ENCODE measurements at regions of chr10 and their contacts with region 1.

Region 1: GRCh38 chr10:63268798-63269503 is 135.8 kb downstream of the NRBF2 start:
- DNase-seq: peak; percentile 100
- ATAC-seq: peak; percentile 90
- H3K4me3 ChIP-seq: peak overlapping the region; percentile 69
- H3K27ac ChIP-seq: peak overlapping the region; percentile 76
- H3K4me1 ChIP-seq: peaks cover 38% of the 10 kb centered on the region
- H3K27me3 ChIP-seq: no peaks in the 10 kb centered on the region
- CTCF ChIP-seq: peak; percentile 63

Region 2: GRCh38 chr10:63217120-63217605 is 51.8 kb before region 1 on chr10:
- CTCF ChIA-PET with region 1: interaction called, 5 read pairs
- POLR2A ChIA-PET with region 1: interaction called, 4 read pairs
- intact Hi-C with region 1: loop called (anchors 1 kb)
- DNase-seq: peak; percentile 92
- ATAC-seq: peak; percentile 85
- H3K4me3 ChIP-seq: no peak overlapping the region
- H3K27ac ChIP-seq: no peak overlapping the region; the same call in 1 of the 2 replicates
- H3K4me1 ChIP-seq: peaks cover 5% of the 10 kb centered on the region
- H3K27me3 ChIP-seq: no peaks in the 10 kb centered on the region
- CTCF ChIP-seq: peak; percentile 100

Region 3: GRCh38 chr10:63416376-63416775 is 147.4 kb after region 1 on chr10:
- CTCF ChIA-PET with region 1: no interaction called
- POLR2A ChIA-PET with region 1: interaction called, 4 read pairs
- intact Hi-C with region 1: loop called (anchors 1 kb)
- DNase-seq: no peak
- ATAC-seq: no peak
- H3K4me3 ChIP-seq: no peak overlapping the region
- H3K27ac ChIP-seq: no peak overlapping the region
- H3K4me1 ChIP-seq: peaks cover 43% of the 10 kb centered on the region
- H3K27me3 ChIP-seq: no peaks in the 10 kb centered on the region
- CTCF ChIP-seq: no peak

Region 4: GRCh38 chr10:63465293-63466143 is 196.6 kb after region 1 on chr10 and contains the start of gene JMJD1C:
- CTCF ChIA-PET with region 1: no interaction called
- POLR2A ChIA-PET with region 1: interaction called, 12 read pairs
- intact Hi-C with region 1: loop called (anchors 1 kb)
- DNase-seq: peak; percentile 97
- ATAC-seq: peak; percentile 67
- H3K4me3 ChIP-seq: peak within 1 kb of the TSS; percentile 83
- H3K27ac ChIP-seq: peak within 1 kb of the TSS; percentile 69
- H3K4me1 ChIP-seq: peaks cover 26% of the 10 kb centered on the region
- H3K27me3 ChIP-seq: no peaks in the 10 kb centered on the region
- CTCF ChIP-seq: peak; percentile 34
- total RNA-seq, gene JMJD1C: 121 and 139 TPM in 2 replicates

Region 5: DNA sequence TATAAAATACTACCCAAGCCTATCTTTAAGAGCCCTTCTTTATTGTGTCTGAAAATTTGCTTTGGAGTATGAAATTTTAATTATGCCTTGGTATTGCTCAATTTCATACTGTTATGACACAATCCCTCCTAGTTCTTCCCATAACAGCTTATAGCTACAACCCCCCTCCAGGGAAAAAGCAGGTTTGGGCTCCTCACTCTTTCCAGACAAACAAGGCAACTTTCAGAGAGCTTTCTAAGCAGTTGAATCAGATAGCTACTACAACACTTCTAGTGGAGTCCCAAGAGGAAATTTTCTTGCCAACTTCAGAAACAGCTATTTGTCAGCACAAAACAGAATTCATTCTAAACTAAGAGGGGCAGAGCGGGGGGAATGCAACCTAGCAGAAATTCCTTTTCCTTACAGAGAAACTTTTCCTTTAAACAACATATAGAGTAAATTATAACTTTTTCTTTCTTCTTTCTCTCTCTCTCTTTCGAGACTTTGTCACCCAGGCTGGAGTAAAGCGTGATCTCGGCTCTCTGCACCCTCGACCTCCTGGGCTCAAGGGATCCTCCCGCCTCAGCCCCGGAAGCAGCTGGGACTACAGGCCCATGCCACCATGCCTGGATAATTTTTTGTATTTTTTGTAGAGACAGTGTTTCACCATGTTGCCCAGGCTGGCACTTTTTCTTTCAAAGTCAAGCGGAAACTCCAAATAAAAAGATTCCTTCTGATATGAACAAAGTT is 222.8 kb after region 1 on chr10:
- CTCF ChIA-PET with region 1: no interaction called
- POLR2A ChIA-PET with region 1: no interaction called
- intact Hi-C with region 1: no loop called
- DNase-seq: peak; percentile 83
- ATAC-seq: peak; percentile 47
- H3K4me3 ChIP-seq: no peak overlapping the region
- H3K27ac ChIP-seq: peak overlapping the region; percentile 84
- H3K4me1 ChIP-seq: peaks cover 23% of the 10 kb centered on the region
- H3K27me3 ChIP-seq: no peaks in the 10 kb centered on the region
- CTCF ChIP-seq: no peak

Region 6: DNA sequence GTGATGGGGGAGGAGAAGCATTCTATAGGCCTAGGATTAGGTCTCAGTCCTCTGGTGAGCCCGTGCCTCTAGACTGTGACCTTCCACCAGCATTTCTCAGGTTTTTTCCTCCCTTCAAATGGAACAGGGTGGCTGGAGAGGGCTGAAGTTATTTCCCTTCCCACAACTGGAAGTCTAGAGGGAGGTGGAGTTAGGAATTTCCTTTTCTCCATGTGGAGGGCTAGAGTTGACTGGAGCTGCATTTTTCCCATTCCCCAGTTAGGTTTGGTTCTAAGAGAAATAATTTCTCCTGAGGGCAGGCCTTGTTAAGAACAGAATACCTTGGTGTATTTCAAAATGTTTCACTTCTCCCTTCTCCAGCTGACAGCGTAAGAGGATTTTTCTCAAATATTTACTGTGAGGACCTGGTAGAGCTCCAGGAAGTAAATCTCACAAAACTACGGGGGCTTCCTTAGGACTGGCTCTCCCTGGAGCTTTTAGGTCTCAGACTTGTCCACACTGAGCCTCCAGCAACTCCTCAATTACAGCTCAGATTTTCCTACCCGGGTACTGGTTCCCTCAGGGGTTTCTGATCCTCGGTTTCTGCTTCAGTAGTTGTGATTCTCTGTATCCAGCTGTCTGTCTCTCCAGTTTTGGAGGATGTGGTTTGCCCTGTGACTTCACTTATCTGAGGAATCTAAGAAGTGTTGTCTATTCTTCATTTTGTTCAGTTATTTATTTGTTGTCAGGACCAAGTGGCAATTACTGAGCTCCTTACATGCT is 246.2 kb after region 1 on chr10:
- CTCF ChIA-PET with region 1: no interaction called
- POLR2A ChIA-PET with region 1: no interaction called
- intact Hi-C with region 1: no loop called
- DNase-seq: peak; percentile 89
- ATAC-seq: peak; percentile 54
- H3K4me3 ChIP-seq: peak overlapping the region; percentile 16; the same call in 1 of the 2 replicates
- H3K27ac ChIP-seq: peak overlapping the region; percentile 41
- H3K4me1 ChIP-seq: peaks cover 56% of the 10 kb centered on the region
- H3K27me3 ChIP-seq: no peaks in the 10 kb centered on the region
- CTCF ChIP-seq: no peak

Region 7: DNA sequence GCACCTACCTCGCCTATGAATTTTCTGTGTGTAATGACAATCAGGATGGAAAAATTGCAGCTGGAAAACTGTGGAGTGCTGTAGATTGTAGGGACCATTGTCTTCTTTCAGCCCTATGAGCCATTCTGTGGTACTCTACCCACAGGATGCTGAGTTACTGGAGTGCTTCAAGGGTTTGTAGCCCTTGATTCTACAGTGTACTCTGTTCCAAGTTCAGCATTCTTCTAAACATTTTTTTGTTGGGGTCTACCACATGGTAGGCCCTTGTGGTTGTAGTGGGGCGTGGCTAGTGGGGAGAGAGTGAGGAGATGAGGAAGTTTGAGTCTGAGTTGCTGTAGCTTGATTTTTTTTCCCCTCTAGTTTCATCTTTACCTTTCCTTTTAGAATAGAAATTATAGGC is 285.7 kb after region 1 on chr10:
- CTCF ChIA-PET with region 1: interaction called, 4 read pairs
- POLR2A ChIA-PET with region 1: interaction called, 14 read pairs
- intact Hi-C with region 1: loop called (anchors 1 kb)
- DNase-seq: peak; percentile 89
- ATAC-seq: peak; percentile 45
- H3K4me3 ChIP-seq: peak overlapping the region; percentile 53
- H3K27ac ChIP-seq: peak overlapping the region; percentile 92
- H3K4me1 ChIP-seq: peaks cover 48% of the 10 kb centered on the region
- H3K27me3 ChIP-seq: no peaks in the 10 kb centered on the region
- CTCF ChIP-seq: no peak

Region 8: GRCh38 chr10:63707254-63707910 is 438.4 kb after region 1 on chr10:
- CTCF ChIA-PET with region 1: no interaction called
- POLR2A ChIA-PET with region 1: interaction called, 3 read pairs
- intact Hi-C with region 1: loop called (anchors 2 kb)
- DNase-seq: peak; percentile 100
- ATAC-seq: peak; percentile 70
- H3K4me3 ChIP-seq: no peak overlapping the region
- H3K27ac ChIP-seq: peak overlapping the region; percentile 76
- H3K4me1 ChIP-seq: peaks cover 62% of the 10 kb centered on the region
- H3K27me3 ChIP-seq: no peaks in the 10 kb centered on the region
- CTCF ChIP-seq: no peak

Measured in PC-3 (cell line).